Activated B cell treated with CpG ODN at 0.5 μM for 24 hours (primary cell): ENCODE measurements at regions of chr22 and their contacts with region 1.

Region 1: GRCh38 chr22:44625981-44626687 is 75.9 kb upstream of the PRR5 start:
- DNase-seq: peak; percentile 67
- ATAC-seq: peak; percentile 90
- H3K4me3 Mint-ChIP-seq: no peak overlapping the region
- H3K27ac Mint-ChIP-seq: no peak overlapping the region
- H3K4me1 Mint-ChIP-seq: no peaks in the 10 kb centered on the region
- H3K27me3 Mint-ChIP-seq: peaks cover 16% of the 10 kb centered on the region
- CTCF ChIP-seq: peak; percentile 55

Region 2: DNA sequence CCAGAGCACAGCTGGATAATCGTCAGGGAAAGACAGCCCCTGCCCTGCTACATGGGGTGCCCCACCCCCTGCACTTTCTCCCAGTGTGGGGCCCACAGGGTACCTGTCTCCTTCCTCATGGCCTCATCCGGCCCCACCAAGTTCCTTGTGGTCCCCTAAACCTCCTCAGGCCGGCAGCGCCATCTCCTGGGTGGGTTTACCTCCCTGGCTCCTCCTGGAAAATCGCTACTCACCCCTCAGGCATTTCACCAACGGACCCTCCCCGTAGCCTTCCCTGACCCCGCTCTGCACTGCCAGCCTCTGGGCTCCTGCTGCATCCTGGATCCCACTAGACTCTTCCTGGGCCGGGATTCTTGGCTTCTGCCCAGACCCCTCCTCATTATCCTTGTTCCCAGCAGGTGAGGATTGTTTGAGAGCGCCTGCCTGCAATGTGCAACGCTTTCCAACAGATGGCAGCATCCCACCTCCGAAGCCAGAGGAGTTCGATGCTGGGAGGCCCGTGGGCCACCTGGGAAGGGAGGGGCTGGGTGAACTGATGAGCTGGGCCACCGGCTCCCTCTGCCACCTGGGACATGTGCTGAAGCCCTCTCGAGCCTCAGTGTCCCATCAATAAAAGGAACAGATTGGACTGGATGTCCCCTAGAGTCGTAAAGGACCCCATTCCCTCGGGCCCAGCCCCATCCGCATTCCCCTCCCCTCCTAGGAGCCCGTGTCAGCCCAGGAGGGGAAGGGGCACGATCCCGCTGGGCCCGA is 1395.0 kb before region 1 on chr22:
- CTCF ChIA-PET with region 1: no interaction called
- POLR2A ChIA-PET with region 1: no interaction called
- intact Hi-C with region 1: loop called (anchors 2 kb)
- DNase-seq: peak; percentile 53
- ATAC-seq: peak; percentile 68
- H3K4me3 Mint-ChIP-seq: no peak overlapping the region
- H3K27ac Mint-ChIP-seq: no peak overlapping the region
- H3K4me1 Mint-ChIP-seq: peaks cover 5% of the 10 kb centered on the region
- H3K27me3 Mint-ChIP-seq: peaks cover 7% of the 10 kb centered on the region
- CTCF ChIP-seq: peak; percentile 93

Region 3: GRCh38 chr22:43884600-43885325 is 741.4 kb before region 1 on chr22:
- CTCF ChIA-PET with region 1: interaction called, 3 read pairs
- POLR2A ChIA-PET with region 1: no interaction called
- intact Hi-C with region 1: loop called (anchors 1 kb)
- DNase-seq: peak; percentile 31
- ATAC-seq: no peak
- H3K4me3 Mint-ChIP-seq: no peak overlapping the region
- H3K27ac Mint-ChIP-seq: no peak overlapping the region
- H3K4me1 Mint-ChIP-seq: peaks cover 5% of the 10 kb centered on the region
- H3K27me3 Mint-ChIP-seq: peaks cover 30% of the 10 kb centered on the region
- CTCF ChIP-seq: no peak

Region 4: DNA sequence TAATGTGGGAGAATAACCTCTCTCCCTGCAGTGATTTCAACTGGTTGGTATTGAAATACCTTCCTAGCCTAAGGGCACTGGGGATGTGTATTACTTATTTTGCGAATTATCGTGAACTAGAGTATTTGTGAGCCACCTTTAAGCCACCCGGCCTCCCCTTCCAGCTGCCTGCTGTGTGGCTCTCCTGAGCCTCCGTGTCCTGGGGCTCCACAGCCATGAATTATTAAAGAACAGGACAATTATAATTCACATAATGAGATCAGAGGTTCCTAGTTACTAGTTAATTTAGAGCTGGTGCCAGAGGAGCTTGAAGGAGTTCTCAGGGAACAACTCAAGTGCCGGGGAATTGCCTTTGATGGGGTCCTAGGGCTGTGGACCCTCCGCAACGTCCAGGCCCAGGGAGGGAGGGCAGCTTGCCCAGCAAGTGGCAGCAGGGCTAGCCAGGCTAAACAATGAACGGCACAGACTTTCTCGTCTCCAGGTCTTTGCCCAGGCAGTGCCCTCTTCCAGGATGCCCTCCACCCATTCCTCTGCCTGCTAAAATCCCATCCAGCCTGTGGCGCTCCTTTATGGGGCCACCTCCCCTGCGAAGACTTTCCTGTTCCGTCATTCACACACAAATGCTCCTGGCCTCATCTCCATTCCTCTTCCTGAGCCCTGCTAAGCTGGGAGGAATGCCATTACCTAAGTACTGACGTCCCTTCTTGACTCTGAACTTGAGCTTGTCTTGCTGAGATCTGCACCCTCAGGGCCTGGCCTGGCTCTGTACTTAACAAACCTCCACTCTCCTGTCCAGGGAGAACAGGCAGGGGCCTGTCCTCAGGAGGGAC is 219.6 kb before region 1 on chr22:
- CTCF ChIA-PET with region 1: no interaction called
- POLR2A ChIA-PET with region 1: no interaction called
- intact Hi-C with region 1: no loop called
- DNase-seq: no peak
- ATAC-seq: no peak
- H3K4me3 Mint-ChIP-seq: no peak overlapping the region
- H3K27ac Mint-ChIP-seq: no peak overlapping the region
- H3K4me1 Mint-ChIP-seq: no peaks in the 10 kb centered on the region
- H3K27me3 Mint-ChIP-seq: peaks cover 3% of the 10 kb centered on the region
- CTCF ChIP-seq: no peak